Activated CD4-positive, alpha-beta T cell treated with anti-CD3 and anti-CD28 coated beads for 36 hours (primary cell): ENCODE measurements at regions of chr2 and their contacts with region 1.

Region 1: DNA sequence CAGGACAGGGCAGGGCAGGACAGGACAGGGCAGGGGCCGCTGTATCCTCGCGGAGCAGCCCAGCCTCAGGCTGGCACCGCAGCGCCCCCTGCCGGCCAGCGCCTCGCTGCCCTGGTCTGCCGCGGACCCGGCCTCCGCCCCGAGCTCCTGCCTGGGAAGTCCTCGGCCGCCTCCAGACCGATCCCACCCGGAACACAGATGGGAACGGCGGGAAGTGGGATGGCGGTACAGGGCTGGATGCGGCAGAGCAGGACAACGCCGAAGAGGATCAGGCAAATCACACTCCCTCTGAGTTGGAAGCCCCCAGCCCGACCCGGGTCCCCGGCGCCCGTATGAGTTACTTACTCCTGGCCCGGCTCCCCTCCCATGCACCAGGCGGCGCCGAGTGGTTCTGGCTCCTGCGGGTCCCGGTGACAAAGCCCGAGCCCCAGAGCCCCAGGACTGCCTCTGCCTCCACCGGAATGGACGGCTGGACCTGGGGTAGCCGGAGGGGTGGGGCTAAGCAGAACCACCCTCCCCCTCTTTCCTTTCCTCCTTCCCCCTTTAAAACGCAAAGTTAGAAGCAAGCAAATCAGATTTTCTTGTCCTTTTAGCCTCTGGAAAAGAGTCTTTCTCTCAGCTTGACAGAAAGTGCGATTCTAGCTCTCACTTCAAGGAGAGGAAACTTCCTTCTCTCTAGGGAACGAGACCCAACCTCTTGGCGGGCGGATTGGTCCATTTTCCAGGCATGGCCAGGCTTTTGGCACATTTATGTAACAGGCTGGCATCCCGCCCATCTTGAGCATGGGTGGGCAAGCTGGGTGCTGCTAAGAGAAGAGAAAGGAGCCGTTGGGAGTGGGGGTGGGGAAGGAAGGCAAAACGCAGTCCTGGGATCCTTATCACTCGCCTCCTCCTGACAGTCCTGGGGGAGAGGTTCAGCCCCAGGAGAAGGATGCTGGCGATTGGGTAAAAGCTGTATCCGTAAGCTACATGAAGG is at the start of gene TP53I3:
- DNase-seq: peak; percentile 91
- ATAC-seq: peak; percentile 96
- H3K4me3 Mint-ChIP-seq: peak within 1 kb of the TSS; percentile 79
- H3K27ac Mint-ChIP-seq: peak within 1 kb of the TSS; percentile 82
- H3K4me1 Mint-ChIP-seq: peaks cover 13% of the 10 kb centered on the region
- H3K27me3 Mint-ChIP-seq: no peaks in the 10 kb centered on the region
- total RNA-seq, gene TP53I3: 1.0 to 1.2 TPM

Region 2: DNA sequence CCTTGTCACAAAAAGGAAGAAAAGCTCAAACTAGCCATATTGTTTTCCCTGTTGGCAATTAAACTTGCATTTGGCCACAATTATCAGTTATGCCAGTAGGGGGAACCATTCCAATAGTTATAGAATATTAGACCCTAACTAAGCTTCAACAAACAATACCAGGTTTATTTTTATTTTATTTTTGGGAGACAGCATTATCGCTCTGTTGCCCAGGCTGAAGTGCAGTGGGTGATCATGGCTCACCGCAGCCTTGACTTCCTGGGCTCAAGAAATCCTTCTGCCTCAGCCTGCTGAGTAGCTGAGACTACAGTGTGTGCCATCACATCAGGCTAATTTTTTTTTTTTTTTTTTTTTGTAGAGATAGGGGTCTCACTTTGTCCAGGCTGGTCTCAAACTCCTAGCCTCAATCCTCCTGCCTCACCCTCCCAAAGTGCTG is 259.9 kb before region 1 on chr2:
- CTCF ChIA-PET with region 1: interaction called, 35 read pairs
- POLR2A ChIA-PET with region 1: interaction called, 5 read pairs
- intact Hi-C with region 1: loop called (anchors 1 kb)
- DNase-seq: peak; percentile 17
- ATAC-seq: peak; percentile 60
- H3K4me3 Mint-ChIP-seq: no peak overlapping the region
- H3K27ac Mint-ChIP-seq: no peak overlapping the region
- H3K4me1 Mint-ChIP-seq: peaks cover 3% of the 10 kb centered on the region
- H3K27me3 Mint-ChIP-seq: no peaks in the 10 kb centered on the region

Region 3: DNA sequence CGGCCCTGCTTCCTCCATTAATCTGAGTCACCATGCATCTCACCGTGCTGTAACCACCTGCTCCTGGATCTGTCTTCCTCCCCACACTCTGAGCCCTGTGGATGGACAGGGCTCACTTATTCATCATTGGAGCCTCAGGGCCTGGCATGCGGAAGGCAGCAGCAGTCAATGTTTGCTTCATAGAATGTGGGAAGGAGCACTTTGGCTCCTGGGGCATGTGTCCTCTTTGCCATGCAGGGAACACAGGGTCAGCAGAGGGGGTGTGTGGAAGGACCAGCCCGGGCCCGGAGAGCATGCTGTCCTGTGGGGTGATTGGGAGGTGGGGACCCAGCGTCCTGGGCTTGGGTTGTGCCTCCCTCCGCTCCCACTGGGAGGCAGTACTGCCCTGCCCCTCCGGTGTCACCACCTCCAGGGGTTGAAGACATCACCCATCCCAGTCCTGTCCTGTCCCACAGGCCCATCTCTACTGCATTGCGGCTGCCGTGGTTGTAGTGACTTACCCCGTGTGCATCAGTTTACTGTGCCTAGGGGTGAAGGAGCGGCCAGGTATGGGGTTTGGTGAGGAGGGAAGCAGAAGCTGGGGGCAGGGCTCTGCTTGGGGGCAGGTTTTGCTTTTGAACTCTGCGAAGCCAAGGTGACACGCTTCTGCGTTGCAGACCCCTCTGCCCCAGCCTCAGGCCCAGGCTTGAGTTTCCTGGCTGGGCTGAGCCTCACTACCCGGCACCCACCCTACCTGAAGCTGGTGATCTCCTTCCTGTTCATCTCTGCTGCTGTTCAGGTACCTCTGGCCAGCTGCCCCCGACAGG is 63.3 kb before region 1 on chr2:
- CTCF ChIA-PET with region 1: interaction called, 3 read pairs
- POLR2A ChIA-PET with region 1: no interaction called
- intact Hi-C with region 1: loop called in 1 of 2 experiments (anchors 1 kb)
- DNase-seq: peak; percentile 53
- ATAC-seq: peak; percentile 81
- H3K4me3 Mint-ChIP-seq: no peak overlapping the region
- H3K27ac Mint-ChIP-seq: no peak overlapping the region
- H3K4me1 Mint-ChIP-seq: no peaks in the 10 kb centered on the region
- H3K27me3 Mint-ChIP-seq: no peaks in the 10 kb centered on the region

Region 4: GRCh38 chr2:24058564-24059271 is 26.0 kb before region 1 on chr2:
- CTCF ChIA-PET with region 1: interaction called, 13 read pairs
- POLR2A ChIA-PET with region 1: no interaction called
- intact Hi-C with region 1: no loop called
- DNase-seq: no peak
- ATAC-seq: no peak
- H3K4me3 Mint-ChIP-seq: no peak overlapping the region
- H3K27ac Mint-ChIP-seq: no peak overlapping the region
- H3K4me1 Mint-ChIP-seq: peaks cover 2% of the 10 kb centered on the region
- H3K27me3 Mint-ChIP-seq: peaks cover 2% of the 10 kb centered on the region

Region 5: GRCh38 chr2:24164125-24164973 is 79.7 kb after region 1 on chr2:
- CTCF ChIA-PET with region 1: interaction called, 13 read pairs
- POLR2A ChIA-PET with region 1: no interaction called
- intact Hi-C with region 1: loop called in 1 of 2 experiments (anchors 1 kb)
- DNase-seq: peak; percentile 82
- ATAC-seq: peak; percentile 88
- H3K4me3 Mint-ChIP-seq: no peak overlapping the region
- H3K27ac Mint-ChIP-seq: no peak overlapping the region
- H3K4me1 Mint-ChIP-seq: no peaks in the 10 kb centered on the region
- H3K27me3 Mint-ChIP-seq: no peaks in the 10 kb centered on the region

Region 6: DNA sequence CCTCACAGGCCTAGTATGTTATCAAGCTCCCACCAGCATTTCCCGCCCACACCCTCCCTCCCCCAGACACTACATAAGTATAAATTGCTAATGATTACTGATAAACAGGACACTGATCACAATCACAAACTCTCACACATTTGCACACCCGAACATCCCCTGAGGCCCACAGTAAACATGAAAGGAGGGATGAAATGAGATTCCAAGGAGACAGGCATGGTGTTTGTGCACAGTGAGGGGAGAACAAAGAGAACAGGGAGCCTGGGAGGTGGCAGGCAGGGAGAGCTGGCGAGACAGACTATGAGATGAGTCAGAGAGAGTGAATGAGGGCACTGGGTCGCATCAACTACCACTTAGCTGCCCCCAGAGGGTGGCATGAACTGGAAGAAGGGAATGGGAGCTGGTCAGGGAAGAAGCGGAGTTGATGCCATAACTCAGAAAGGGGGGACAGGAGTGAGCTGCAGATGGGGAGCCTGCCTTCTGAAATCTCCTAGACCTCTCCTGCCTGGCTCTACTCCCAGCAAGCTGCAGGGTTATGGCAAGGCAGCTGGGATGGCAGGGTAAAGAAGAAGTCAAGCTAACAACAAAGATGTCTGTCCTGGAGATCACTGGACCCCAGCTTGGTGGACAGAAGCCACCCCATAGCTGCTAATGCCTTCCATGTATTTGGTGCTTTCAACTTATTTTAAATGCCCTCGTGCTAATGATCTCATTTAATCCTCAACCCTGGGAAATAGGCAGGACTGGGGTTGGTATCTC is 1892.5 kb after region 1 on chr2:
- CTCF ChIA-PET with region 1: no interaction called
- POLR2A ChIA-PET with region 1: no interaction called
- intact Hi-C with region 1: no loop called
- DNase-seq: no peak
- ATAC-seq: no peak
- H3K4me3 Mint-ChIP-seq: no peak overlapping the region
- H3K27ac Mint-ChIP-seq: no peak overlapping the region
- H3K4me1 Mint-ChIP-seq: peaks cover 6% of the 10 kb centered on the region
- H3K27me3 Mint-ChIP-seq: no peaks in the 10 kb centered on the region